Right ventricle myocardium inferior (tissue), 1 donor: ENCODE measurements at regions of chr17 and their contacts with region 1.

Region 1: GRCh38 chr17:15398736-15399331 is 57.4 kb upstream of the TEKT3 start:
- DNase-seq: no peak
- ATAC-seq: peak; percentile 63

Region 2: DNA sequence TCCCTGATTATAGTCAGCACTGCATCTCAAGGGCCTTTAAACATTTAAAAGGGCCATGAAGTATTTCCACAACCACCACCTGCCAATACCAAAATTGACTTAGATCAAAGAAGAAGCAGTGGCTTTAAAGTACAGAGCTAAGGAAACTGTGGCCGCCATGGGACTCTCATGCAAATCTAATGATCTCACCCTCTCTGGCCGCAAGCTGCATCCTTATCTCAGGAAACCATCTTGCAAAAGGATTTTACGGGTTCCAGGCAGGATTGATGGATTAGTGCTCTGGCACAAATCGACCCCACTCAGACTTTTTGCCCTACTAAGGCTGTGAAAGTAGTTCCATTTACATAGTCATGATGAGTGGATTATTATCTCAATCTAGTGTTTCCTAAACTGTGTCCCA is 46.0 kb after region 1 on chr17:
- intact Hi-C with region 1: loop called (anchors 5 kb)
- DNase-seq: no peak
- ATAC-seq: no peak